WTC11 (cell line): ENCODE measurements at regions of chr10 and their contacts with region 1.

Region 1: GRCh38 chr10:131016556-131016955 is 295.0 kb downstream of the TCERG1L start:
- DNase-seq: no peak
- ATAC-seq: no peak
- H3K4me3 Mint-ChIP-seq: no peak overlapping the region
- H3K27ac Mint-ChIP-seq: no peak overlapping the region
- H3K4me1 Mint-ChIP-seq: no peaks in the 10 kb centered on the region
- H3K27me3 Mint-ChIP-seq: peaks cover 8% of the 10 kb centered on the region
- CTCF ChIP-seq: no peak

Region 2: GRCh38 chr10:130719448-130719752 is 297.2 kb before region 1 on chr10:
- CTCF ChIA-PET with region 1: no interaction called
- POLR2A ChIA-PET with region 1: interaction called, 10 read pairs
- DNase-seq: no peak
- ATAC-seq: no peak
- H3K4me3 Mint-ChIP-seq: no peak overlapping the region
- H3K27ac Mint-ChIP-seq: no peak overlapping the region
- H3K4me1 Mint-ChIP-seq: no peaks in the 10 kb centered on the region
- H3K27me3 Mint-ChIP-seq: peaks cover 4% of the 10 kb centered on the region
- CTCF ChIP-seq: no peak

Region 3: GRCh38 chr10:131177431-131178327 is 161.1 kb after region 1 on chr10:
- CTCF ChIA-PET with region 1: no interaction called
- POLR2A ChIA-PET with region 1: no interaction called
- DNase-seq: no peak
- ATAC-seq: no peak
- H3K4me3 Mint-ChIP-seq: no peak overlapping the region
- H3K27ac Mint-ChIP-seq: no peak overlapping the region
- H3K4me1 Mint-ChIP-seq: no peaks in the 10 kb centered on the region
- H3K27me3 Mint-ChIP-seq: peaks cover 3% of the 10 kb centered on the region; the same call in 1 of the 2 replicates
- CTCF ChIP-seq: no peak